Heart left ventricle (tissue), 16 donors: ENCODE measurements at regions of chrX and their contacts with region 1.

Region 1: DNA sequence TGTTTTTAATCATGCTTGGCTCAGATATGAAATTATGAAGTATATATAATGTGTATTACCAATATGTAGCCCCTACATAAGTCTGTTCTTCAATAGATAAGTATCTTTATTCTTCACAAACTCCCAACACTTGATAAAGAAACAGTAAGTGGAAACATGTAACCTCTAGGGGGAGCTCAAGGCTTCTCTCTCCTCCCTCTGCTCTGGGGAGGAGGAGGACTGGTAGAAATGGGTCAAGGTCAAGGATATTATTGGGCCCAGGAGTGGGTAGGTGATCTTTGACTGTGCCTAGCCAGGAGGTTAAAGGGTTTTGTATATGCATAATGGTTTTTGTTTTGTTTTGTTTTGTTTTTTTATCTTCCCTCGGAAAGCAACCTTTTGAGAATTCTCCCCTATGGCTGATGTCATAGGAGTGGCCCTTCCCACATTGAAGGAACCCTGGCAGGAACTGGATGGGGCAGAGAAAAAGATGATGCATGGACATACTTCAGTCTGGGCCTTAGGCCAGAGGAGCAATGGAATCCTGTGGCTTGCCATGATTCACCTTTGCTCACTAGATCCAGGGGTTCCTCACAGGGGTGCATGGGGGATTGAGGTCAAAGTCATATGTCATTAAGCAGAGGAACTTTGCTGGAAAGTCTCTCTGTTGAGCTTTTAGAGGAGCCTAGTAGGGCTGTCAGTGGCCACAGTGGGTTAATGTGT is 460.3 kb downstream of the MID1IP1 start:
- DNase-seq: peak in 1 of 5 donors; percentile 7
- ATAC-seq: peak in 1 of 4 donors; percentile 48
- H3K4me3 ChIP-seq: no peak overlapping the region
- H3K27ac ChIP-seq: no peak overlapping the region
- H3K4me1 ChIP-seq: peaks cover 0 to 4% (median 0%) of the 10 kb centered on the region in 12 donors
- H3K27me3 ChIP-seq: peaks cover 0 to 15% (median 0%) of the 10 kb centered on the region in 9 donors
- CTCF ChIP-seq: peak; percentile 31 to 63 (median 49)
- POLR2A ChIP-seq: no peak

Region 2: DNA sequence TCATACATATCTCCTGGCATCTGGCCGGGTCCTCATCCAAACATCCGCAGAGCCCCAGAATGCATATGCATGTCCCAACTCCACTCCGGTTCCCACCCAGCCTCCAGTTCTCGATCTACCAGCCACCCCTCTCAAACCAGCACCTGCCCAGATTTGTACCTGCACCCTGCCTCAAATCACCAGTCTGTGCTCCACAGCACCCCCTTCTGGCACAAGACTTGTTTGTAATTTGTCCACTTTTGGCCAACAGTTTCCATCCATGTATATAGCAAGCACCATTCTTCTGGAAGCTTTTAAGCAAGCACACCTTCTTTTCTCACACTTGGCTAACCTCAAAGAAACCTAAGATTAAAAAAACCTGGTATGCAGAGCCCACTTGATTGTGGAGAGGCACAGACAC is 183.7 kb after region 1 on chrX:
- intact Hi-C with region 1: loop called in 2 of 10 experiments (anchors 5 to 10 kb)
- DNase-seq: no peak
- ATAC-seq: no peak
- H3K4me3 ChIP-seq: no peak overlapping the region
- H3K27ac ChIP-seq: no peak overlapping the region
- H3K4me1 ChIP-seq: no peaks in the 10 kb centered on the region
- H3K27me3 ChIP-seq: peaks cover 0 to 10% (median 0%) of the 10 kb centered on the region in 9 donors
- CTCF ChIP-seq: peak in 11 of 12 donors; percentile 9 to 45 (median 22)
- POLR2A ChIP-seq: no peak